ENCODE measurements at regions of chr7 and their contacts with region 1.

Region 1: GRCh38 chr7:27689591-27690164 is 27.0 kb upstream of the HIBADH start:
- ATAC-seq: peak in 3 of 8 experiments; percentile 46 to 79 (median 73)
- H3K4me3 ChIP-seq: no peak overlapping the region
- H3K27ac ChIP-seq: no peak overlapping the region
- H3K4me1 ChIP-seq: peaks cover 0 to 7% of the 10 kb centered on the region in 2 donors

Region 2: DNA sequence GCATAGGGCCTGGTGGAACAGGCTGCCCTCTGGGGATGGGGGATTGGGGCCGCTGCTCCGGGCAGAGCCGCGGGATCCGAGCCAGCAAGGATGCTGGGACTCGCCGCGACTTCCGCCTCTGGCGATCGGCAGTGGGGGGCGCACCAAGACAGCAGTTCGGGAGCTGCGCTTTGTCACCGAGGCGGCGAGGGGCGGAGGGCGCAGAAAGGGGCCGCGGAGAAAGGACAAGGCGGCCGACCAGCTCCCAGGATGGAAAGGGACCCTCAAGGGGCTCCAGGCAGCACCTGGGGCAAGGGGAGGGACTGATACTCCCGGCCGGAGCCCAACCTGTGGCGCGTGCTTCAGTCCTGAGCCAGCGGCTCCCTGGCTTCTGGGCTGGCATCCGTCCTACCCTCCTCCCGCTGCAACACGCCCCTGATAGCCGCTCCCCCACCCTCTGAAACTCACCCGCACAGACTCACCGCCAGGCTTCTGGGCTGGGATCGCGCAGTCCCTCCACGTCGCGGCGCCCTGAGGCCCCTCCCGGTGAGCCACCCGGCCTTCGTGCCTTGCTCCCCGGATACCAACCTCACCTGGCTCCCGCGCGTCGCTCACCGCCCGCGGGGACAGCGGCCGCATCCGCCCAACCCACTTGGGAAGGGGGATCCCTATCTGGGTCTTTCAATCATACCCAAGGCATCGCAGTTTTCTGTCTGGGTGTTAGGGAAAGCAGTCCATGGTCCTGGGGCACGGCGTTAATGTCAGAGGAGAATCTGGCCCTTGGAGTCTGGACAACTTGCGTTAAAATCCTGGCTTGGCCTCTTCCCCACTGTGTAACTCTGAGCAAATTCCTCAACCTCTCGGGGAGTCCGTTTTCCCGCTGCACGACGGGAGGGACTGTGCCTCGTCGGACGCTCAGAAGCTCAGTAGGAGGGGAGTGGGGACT is 454.0 kb before region 1 on chr7:
- in situ Hi-C with region 1: no loop called
- ATAC-seq: peak; percentile 52 to 93 (median 87)
- H3K4me3 ChIP-seq: peak overlapping the region; percentile 33 to 47 (median 40)
- H3K27ac ChIP-seq: no peak overlapping the region
- H3K4me1 ChIP-seq: peaks cover 7 to 10% of the 10 kb centered on the region in 2 donors

Region 3: GRCh38 chr7:27921081-27921836 is 231.6 kb after region 1 on chr7:
- in situ Hi-C with region 1: loop called in 1 of 9 experiments (anchors 25 kb)
- ATAC-seq: peak; percentile 81 to 98 (median 88)
- H3K4me3 ChIP-seq: no peak overlapping the region
- H3K27ac ChIP-seq: no peak overlapping the region
- H3K4me1 ChIP-seq: peaks cover 0 to 3% of the 10 kb centered on the region in 2 donors

Region 4: DNA sequence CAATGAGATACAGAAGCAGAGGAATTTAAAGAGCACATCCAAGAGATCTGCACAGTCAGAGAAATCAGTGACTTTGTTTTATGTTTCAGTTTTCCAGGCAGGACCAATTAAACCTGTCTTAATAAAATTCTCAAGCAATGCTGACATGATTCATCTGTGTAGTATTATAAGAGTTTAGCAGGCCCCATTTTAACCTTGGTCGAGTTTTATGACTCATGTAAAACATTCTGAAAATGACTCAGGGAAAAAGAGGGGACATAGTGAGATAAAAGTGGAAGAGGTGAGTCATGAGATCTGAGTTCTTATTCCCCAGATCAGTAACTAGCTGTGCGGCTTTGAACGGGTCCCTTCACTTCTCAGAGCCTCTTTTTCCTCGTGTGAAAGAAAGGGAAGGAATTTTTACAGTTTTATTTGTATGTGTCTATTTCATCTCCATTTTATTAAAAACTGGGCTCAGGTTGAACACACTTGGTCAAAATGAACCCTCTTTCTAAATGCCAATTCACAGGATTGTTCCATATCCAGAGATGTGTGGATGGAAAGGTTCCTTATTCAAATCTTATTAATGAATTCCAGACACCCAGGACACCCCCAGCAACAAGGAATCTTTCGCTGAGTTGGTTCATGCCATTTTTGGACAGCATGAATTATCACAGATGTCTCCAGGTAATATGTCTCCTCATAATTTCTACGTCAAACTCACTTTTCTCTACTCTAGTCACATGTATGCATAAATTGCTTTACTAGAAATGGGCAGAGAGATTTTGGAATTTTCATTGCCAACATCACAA is 347.7 kb after region 1 on chr7:
- in situ Hi-C with region 1: no loop called
- ATAC-seq: peak in 7 of 8 experiments; percentile 39 to 94 (median 65)
- H3K4me3 ChIP-seq: no peak overlapping the region
- H3K27ac ChIP-seq: no peak overlapping the region
- H3K4me1 ChIP-seq: no peaks in the 10 kb centered on the region

Measured in motor neuron (in vitro differentiated cells).